ENCODE measurements at regions of chr20 and their contacts with region 1.

Region 1: GRCh38 chr20:13105864-13106457 is 97.2 kb downstream of the SPTLC3 start:
- DNase-seq: no peak
- H3K4me3 ChIP-seq: no peak overlapping the region
- H3K27ac ChIP-seq: no peak overlapping the region
- H3K4me1 ChIP-seq: peaks cover 3% of the 10 kb centered on the region
- H3K27me3 ChIP-seq: no peaks in the 10 kb centered on the region
- CTCF ChIP-seq: peak; percentile 41 to 64 (median 59)
- POLR2A ChIP-seq: no peak

Region 2: DNA sequence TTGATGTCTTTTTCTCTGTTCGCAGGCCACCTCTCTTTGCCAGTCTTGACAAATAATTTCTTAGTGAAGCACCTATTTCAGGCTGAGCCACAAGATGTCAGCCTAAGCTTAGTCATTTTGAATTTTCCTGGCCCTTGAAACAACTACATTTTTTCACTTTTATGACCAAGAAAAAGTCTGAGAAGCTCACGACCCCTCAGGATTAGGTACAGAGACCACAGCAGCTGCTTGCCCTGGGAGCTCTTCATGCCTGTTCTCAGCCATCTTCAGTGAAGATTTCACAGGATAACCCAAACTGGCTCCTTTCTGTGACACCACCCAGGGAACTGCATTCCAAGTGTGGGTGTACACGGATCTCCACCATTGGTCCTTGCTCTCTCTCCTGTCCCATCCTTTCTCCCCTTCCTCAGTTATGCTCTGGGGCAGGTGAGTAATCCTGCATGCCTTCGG is 135.6 kb before region 1 on chr20:
- intact Hi-C with region 1: loop called (anchors 10 kb)
- DNase-seq: peak; percentile 30
- H3K4me3 ChIP-seq: no peak overlapping the region
- H3K27ac ChIP-seq: no peak overlapping the region
- H3K4me1 ChIP-seq: no peaks in the 10 kb centered on the region
- H3K27me3 ChIP-seq: no peaks in the 10 kb centered on the region
- CTCF ChIP-seq: peak; percentile 30 to 53 (median 53)
- POLR2A ChIP-seq: no peak

Region 3: DNA sequence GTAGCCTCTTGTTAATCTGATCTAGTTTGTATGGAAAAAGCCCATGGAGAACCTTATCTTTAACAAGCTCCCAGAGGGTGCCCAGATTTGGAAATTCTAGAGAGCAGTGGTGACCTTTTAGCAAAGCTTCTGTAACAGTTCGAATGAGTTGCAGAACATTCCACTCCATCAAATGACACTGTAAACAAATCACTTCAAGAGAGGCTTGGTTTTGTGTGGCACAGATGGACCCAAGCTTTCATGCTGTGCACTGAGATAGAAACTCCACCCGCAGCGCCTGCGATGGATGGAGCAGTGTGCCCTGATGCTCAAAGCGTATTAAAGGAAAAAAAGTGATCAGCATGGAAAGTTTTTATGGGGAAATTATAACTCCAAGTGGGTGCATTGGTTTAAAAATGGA is 60.0 kb after region 1 on chr20:
- intact Hi-C with region 1: no loop called
- DNase-seq: no peak
- H3K4me3 ChIP-seq: no peak overlapping the region
- H3K27ac ChIP-seq: no peak overlapping the region
- H3K4me1 ChIP-seq: no peaks in the 10 kb centered on the region
- H3K27me3 ChIP-seq: no peaks in the 10 kb centered on the region
- CTCF ChIP-seq: no peak
- POLR2A ChIP-seq: no peak

Region 4: GRCh38 chr20:13231031-13231752 is 125.2 kb after region 1 on chr20:
- intact Hi-C with region 1: no loop called
- DNase-seq: no peak
- H3K4me3 ChIP-seq: no peak overlapping the region
- H3K27ac ChIP-seq: no peak overlapping the region
- H3K4me1 ChIP-seq: no peaks in the 10 kb centered on the region
- H3K27me3 ChIP-seq: no peaks in the 10 kb centered on the region
- CTCF ChIP-seq: no peak
- POLR2A ChIP-seq: no peak